ENCODE measurements at regions of chr20 and their contacts with region 1.

Region 1: GRCh38 chr20:20824924-20825584 is 112.6 kb upstream of the RALGAPA2 start:
- DNase-seq: peak; percentile 20
- ATAC-seq: peak; percentile 56
- H3K4me3 Mint-ChIP-seq: no peak overlapping the region
- H3K27ac Mint-ChIP-seq: no peak overlapping the region
- H3K4me1 Mint-ChIP-seq: peaks cover 4% of the 10 kb centered on the region
- H3K27me3 Mint-ChIP-seq: peaks cover 13% of the 10 kb centered on the region
- CTCF ChIP-seq: no peak

Region 2: DNA sequence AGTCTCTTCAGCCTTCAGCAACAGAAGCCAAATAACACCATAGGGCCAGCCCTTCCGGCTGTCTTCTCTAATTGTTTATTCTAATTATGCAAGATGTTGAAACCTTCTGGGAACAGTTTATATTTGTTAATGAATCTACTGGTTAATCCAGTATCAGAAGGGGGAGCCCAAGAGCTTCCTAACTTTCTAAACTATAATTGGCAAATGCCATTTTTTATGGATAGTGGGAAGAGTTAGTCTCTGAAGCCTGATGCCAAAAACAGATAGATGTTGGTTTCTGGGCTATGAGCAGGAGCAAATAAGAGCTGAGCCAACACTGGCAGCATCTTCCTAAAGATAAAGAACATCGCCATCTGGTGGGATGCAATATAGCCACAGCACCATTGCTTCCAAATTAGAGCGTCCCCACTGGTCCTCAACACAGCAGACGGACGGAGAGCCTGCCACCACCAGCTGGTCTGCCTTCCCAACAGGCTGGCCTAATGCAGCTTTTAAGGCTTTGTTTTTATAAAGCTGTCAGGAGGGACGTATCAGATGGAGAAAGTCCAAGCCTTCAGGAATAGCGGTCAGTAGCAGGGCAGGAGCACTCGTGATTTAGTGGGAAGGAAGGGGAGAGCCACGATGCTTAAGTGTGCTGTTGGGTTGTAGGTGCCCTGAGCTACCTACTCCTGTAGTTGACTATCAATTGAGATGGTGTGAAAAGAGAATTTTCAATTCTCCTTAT is 231.4 kb before region 1 on chr20:
- CTCF ChIA-PET with region 1: no interaction called
- POLR2A ChIA-PET with region 1: no interaction called
- intact Hi-C with region 1: loop called (anchors 10 kb)
- DNase-seq: no peak
- ATAC-seq: no peak
- H3K4me3 Mint-ChIP-seq: no peak overlapping the region
- H3K27ac Mint-ChIP-seq: no peak overlapping the region
- H3K4me1 Mint-ChIP-seq: no peaks in the 10 kb centered on the region
- H3K27me3 Mint-ChIP-seq: no peaks in the 10 kb centered on the region
- CTCF ChIP-seq: no peak

Region 3: DNA sequence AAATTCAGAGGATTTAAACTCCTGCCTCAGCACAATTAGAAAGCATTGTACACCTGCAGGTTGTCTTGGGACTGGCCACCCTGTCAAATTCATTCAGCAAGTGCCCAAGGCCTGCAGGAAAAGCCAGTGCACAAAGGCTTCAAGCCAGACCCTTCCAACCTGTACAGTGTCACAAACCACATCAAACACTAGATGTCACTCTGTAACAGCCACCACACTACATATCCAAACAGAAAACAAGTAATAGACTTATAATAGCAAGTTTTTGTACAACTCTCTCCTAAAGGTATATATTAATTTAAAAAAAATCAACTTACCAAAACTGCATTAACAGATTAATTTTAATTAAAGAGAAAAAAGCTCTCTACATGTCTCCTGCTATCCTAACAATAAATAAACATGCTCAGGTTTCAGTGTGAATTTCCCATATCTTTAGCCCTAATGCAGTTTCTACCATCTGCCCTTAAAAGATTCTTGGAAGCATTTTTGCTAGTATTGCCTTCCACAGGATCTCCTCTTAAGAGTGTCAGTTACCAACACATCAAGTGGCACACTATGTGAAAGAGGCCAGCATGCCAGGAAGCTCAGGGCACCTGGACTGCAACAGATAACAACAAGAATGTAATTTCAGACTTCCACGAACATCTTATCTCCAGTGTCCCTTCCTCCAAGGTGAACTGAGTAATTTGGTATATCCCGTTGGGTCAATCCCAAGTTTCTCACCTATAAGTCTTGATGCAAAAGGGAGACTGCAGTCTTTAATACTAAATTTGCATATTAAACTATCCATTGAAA is 160.1 kb before region 1 on chr20:
- CTCF ChIA-PET with region 1: interaction called, 26 read pairs
- POLR2A ChIA-PET with region 1: no interaction called
- intact Hi-C with region 1: loop called (anchors 1 kb)
- DNase-seq: no peak
- ATAC-seq: no peak
- H3K4me3 Mint-ChIP-seq: no peak overlapping the region
- H3K27ac Mint-ChIP-seq: no peak overlapping the region
- H3K4me1 Mint-ChIP-seq: peaks cover 36% of the 10 kb centered on the region
- H3K27me3 Mint-ChIP-seq: no peaks in the 10 kb centered on the region
- CTCF ChIP-seq: no peak